Ascending aorta (tissue), 2 donors: ENCODE measurements at regions of chr2 and their contacts with region 1.

Region 1: DNA sequence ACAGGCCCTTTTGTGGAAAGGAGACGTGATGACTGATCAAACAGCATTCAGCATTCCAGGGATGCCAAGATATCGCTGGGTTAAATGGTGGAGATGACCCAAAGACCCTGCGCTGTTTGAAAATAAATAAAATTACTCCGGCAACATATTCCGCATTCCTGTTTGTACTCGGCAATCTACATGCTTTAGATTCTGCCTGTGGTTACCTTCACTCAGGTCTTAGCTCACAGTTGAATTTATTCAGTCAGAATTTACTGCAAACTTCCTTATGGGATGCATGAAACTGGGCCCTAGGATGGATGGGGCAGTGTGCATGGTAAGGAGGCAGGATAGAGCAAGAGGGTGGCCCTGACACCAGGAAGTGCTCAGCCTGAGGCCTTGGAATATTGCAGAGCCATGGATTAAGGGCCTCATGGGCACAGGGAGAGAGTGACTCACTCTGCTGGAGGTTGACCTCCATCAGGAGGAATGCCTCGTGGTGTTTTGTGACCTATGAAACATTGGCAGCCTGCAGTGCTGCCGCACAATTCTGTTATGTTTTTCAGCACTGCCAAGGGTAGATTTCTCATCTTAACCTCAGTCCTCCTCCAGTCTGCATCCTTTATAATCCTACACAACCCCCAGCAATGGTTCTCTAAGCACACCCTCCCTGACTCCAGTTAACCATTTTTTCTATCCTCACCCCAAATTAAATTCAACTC is 321.4 kb downstream of the IRS1 start:
- DNase-seq: peak; percentile 28 to 82
- H3K4me3 ChIP-seq: peak overlapping the region in 1 of 2 donors; percentile 8
- H3K27ac ChIP-seq: peak overlapping the region; percentile 74 to 82
- H3K4me1 ChIP-seq: peaks cover 6 to 8% of the 10 kb centered on the region in 2 donors
- H3K27me3 ChIP-seq: no peaks in the 10 kb centered on the region
- CTCF ChIP-seq: no peak

Region 2: DNA sequence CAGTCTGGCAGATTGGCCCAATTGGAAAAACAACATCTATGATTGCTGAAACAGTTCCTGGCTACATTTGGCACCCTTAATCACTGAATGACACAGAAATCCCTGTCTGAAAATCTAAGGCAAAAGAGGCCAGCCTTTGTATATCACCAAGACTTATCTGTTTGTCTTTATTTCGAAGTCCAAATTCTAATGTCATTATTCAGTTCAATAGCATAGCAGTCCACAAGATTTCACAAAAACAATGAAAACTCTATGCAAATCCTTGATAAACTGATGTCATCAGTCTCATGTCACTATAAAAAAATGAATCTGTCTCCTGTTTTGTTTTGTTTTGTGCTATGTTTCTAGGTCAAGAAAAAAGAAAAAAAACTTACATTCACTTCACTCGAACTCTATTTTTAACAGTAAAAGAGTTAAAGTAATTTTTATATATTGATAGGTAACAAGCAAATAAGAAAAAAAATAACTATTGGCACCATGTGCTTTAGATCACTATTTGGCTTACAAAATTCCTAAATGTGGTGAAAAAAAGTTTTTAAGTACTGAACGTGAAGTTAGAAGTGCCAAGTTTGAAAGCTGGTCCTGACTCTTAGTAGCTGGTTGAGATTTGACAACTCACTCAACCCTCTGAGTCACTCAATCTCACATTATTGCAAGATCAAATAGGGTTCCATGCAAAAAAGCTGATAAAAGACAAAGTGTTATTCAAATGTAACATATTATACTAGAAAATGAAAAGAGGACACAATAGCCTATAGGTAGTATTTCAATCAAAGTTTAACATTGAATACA is 37.9 kb before region 1 on chr2:
- intact Hi-C with region 1: loop called (anchors 5 kb)
- DNase-seq: no peak
- H3K4me3 ChIP-seq: no peak overlapping the region
- H3K27ac ChIP-seq: peak overlapping the region; percentile 46 to 57
- H3K4me1 ChIP-seq: peaks cover 0 to 8% of the 10 kb centered on the region in 2 donors
- H3K27me3 ChIP-seq: no peaks in the 10 kb centered on the region
- CTCF ChIP-seq: no peak

Region 3: GRCh38 chr2:226489775-226490541 is 11.7 kb after region 1 on chr2:
- intact Hi-C with region 1: loop called (anchors 1 kb)
- DNase-seq: no peak
- H3K4me3 ChIP-seq: no peak overlapping the region
- H3K27ac ChIP-seq: no peak overlapping the region
- H3K4me1 ChIP-seq: no peaks in the 10 kb centered on the region
- H3K27me3 ChIP-seq: no peaks in the 10 kb centered on the region
- CTCF ChIP-seq: no peak

Region 4: DNA sequence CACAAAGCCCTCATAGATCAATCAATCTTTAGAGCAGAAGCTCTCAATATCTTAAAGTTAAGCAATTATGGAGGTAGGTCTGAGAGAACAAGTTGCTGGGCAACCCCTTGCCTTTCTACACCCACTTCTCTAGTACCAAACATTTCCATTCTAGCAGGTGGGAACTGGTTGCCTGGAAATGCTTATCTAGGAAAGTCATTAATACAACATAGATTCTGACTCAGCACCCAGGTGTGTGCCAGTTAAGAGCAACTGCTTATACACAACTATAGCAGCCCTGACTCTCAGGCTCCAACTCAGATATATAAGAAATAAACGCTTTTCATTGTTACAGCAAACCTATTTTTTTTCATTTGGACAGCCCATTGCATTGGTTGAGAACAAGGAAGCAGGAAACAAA is 83.7 kb after region 1 on chr2:
- intact Hi-C with region 1: no loop called
- DNase-seq: no peak
- H3K4me3 ChIP-seq: no peak overlapping the region
- H3K27ac ChIP-seq: no peak overlapping the region
- H3K4me1 ChIP-seq: no peaks in the 10 kb centered on the region
- H3K27me3 ChIP-seq: no peaks in the 10 kb centered on the region
- CTCF ChIP-seq: no peak